Activated T-helper 2 cell treated with anti-CD3 and anti-CD28 coated beads, Interferon-gamma antibody, Interleukin-2, Interleukin-4, amounts not matched to agents 10 μg/mL and 5 μg/mL and 100 μg/mL, durations not matched to agents 14 hours and 24 hours and 36 hours (primary cell): ENCODE measurements at regions of chr1 and their contacts with region 1.

Region 1: DNA sequence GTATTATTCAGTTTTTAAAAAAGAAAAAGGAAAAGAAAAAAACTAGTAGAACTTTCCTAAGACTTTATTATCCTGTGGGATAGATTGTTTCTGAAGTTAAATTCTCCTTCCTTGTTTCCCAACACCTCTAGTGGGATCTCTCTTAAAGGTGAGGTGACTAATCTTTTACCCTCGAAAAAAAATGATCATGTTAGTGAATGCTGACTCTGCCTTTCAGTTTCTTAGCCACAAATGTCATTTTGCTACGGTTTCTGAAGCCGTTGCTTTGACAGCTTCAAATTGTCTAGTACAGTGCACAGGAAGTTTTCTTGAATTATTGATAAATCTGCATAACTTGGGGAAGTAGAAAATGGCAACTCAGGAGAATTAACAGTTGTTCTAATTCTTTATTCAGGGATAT is 13.0 kb upstream of the NEK7 start:
- DNase-seq: no peak
- H3K4me3 Mint-ChIP-seq: no peak overlapping the region
- H3K27ac Mint-ChIP-seq: no peak overlapping the region
- H3K4me1 Mint-ChIP-seq: peaks cover 23% of the 10 kb centered on the region
- H3K27me3 Mint-ChIP-seq: no peaks in the 10 kb centered on the region

Region 2: DNA sequence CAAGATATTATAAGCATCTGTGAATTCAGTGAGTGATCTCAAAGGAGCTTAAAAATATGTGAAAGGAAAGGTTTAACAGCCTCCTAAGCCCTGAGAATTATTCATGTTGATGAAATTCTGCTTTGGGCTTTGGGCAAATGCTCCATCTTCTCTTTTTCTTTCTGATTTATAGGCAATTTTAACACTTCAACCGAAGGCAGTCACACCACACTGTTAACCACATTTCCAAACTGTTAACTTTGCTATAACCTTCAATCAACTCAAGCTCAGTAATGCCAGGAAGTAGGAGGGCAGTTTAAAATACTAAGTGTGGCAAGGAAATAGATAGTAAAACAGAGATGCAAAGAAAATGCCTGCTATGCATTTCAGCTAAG is 41.4 kb before region 1 on chr1:
- intact Hi-C with region 1: loop called (anchors 5 kb)
- DNase-seq: no peak
- H3K4me3 Mint-ChIP-seq: no peak overlapping the region
- H3K27ac Mint-ChIP-seq: peak overlapping the region; percentile 56
- H3K4me1 Mint-ChIP-seq: peaks cover 21% of the 10 kb centered on the region
- H3K27me3 Mint-ChIP-seq: peaks cover 2% of the 10 kb centered on the region

Region 3: DNA sequence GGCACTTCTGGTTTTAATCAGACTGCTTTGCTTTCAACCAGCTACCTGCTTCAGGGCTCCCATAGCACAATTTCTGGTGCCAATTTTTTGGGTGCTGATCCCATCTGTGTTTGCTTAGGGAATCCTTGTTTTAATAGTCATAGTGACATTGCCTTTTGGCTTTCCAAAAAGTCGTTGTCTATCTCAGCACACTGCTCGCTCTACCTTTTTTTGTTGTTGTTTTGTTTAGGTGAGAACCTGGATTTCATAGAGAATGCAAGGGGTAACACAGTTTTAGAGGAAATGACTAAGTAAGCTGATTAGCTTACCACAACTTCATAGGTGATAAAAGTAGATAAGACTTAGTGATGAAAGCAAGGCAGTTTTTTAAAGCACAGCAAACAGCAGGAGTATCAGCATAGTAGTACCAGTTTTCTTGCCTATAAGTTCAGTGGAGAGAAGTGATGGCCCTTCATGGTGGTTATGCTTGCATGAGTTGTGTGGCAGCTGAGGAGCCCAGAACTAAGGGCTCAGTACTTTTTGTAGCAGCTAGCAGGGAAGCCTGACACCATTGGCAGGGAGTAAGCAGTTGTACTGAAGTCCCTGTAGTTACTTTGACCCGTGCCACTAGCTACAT is 44.3 kb after region 1 on chr1:
- intact Hi-C with region 1: no loop called
- DNase-seq: no peak
- H3K4me3 Mint-ChIP-seq: peak overlapping the region; percentile 5
- H3K27ac Mint-ChIP-seq: peak overlapping the region; percentile 4
- H3K4me1 Mint-ChIP-seq: peaks cover 66% of the 10 kb centered on the region
- H3K27me3 Mint-ChIP-seq: no peaks in the 10 kb centered on the region

Region 4: GRCh38 chr1:198232378-198232777 is 88.6 kb after region 1 on chr1:
- intact Hi-C with region 1: no loop called
- DNase-seq: no peak
- H3K4me3 Mint-ChIP-seq: no peak overlapping the region
- H3K27ac Mint-ChIP-seq: no peak overlapping the region
- H3K4me1 Mint-ChIP-seq: peaks cover 22% of the 10 kb centered on the region
- H3K27me3 Mint-ChIP-seq: no peaks in the 10 kb centered on the region